Breast epithelium (tissue), 4 donors: ENCODE measurements at regions of chr2 and their contacts with region 1.

Region 1: DNA sequence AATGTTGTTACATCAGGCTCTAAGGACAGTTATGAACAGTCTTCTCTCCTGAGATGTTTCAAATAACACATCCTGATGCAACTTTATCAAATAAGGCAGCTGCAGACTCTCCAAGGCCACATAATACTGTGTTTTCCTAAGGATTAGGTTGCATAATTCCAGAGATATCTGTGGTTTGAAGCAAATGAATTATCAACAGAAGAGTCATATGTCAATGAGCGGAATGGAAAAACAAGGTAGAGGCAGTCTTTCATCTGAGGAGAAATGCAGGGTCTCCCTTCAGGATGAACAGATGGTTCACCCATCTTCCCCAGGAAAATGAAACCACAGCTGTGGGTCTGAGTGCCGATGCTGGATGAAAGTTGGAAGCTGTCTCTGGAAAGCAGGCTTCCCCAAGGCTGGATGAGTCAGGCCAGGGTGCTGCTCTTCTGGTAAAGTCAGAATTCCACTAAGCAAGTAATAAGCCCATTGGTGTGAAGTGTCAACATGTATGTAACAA is 22.2 kb downstream of the LYG1 start:
- DNase-seq: no peak
- H3K4me3 ChIP-seq: no peak overlapping the region
- H3K27ac ChIP-seq: no peak overlapping the region
- H3K4me1 ChIP-seq: no peaks in the 10 kb centered on the region
- H3K27me3 ChIP-seq: no peaks in the 10 kb centered on the region
- CTCF ChIP-seq: no peak
- POLR2A ChIP-seq: no peak

Region 2: DNA sequence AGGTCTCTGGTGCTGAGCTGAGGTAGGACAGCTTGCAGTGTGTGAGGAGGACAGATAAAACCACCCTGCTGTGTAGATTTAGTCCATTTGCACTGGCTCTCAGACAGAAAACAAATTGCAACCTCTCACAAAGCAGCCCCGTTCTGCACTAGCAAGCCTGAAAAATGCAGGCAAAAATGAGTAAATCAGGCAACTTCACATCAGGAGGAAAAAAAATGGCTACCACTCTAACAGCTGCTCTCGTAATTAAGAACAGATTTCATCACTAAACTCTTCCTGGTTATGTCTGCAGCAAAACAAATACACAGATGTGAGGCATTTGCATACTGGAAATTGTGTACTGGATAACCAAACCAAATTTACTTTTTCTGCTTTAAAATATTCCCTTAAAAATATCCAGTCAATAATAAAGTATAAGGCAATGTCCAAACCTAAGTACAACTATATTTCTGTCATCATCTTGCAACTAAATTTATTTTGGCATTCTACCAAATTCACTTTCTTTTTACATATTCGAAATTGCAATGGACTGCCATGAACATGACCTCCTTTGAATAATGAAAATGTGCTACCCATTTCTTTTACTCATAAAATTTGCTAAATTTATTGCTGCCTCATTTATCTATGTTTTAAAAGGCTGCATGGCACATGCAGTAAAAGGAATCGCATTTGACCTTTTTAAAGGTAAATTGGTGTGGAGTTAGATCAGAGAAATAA is 706.1 kb after region 1 on chr2:
- intact Hi-C with region 1: no loop called
- DNase-seq: no peak
- H3K4me3 ChIP-seq: no peak overlapping the region
- H3K27ac ChIP-seq: no peak overlapping the region
- H3K4me1 ChIP-seq: no peaks in the 10 kb centered on the region
- H3K27me3 ChIP-seq: no peaks in the 10 kb centered on the region
- CTCF ChIP-seq: no peak
- POLR2A ChIP-seq: no peak

Region 3: GRCh38 chr2:100350707-100351106 is 1071.9 kb after region 1 on chr2:
- intact Hi-C with region 1: loop called (anchors 5 kb)
- DNase-seq: no peak
- H3K4me3 ChIP-seq: no peak overlapping the region
- H3K27ac ChIP-seq: no peak overlapping the region
- H3K4me1 ChIP-seq: no peaks in the 10 kb centered on the region
- H3K27me3 ChIP-seq: no peaks in the 10 kb centered on the region
- CTCF ChIP-seq: no peak
- POLR2A ChIP-seq: no peak